IMR-90 (cell line): ENCODE measurements at regions of chr7 and their contacts with region 1.

Region 1: GRCh38 chr7:141533149-141533949 is 17.9 kb upstream of the AGK start:
- DNase-seq: peak; percentile 74
- ATAC-seq: peak; percentile 89
- H3K4me3 ChIP-seq: no peak overlapping the region
- H3K27ac ChIP-seq: no peak overlapping the region
- H3K4me1 ChIP-seq: no peaks in the 10 kb centered on the region
- H3K27me3 ChIP-seq: 0 out of 2 replicates have a peak, but pooled peaks cover 2% of the 10 kb centered on the region
- CTCF ChIP-seq: peak; percentile 82
- POLR2A ChIP-seq: no peak
- RAD21 ChIP-seq: peak; percentile 80

Region 2: DNA sequence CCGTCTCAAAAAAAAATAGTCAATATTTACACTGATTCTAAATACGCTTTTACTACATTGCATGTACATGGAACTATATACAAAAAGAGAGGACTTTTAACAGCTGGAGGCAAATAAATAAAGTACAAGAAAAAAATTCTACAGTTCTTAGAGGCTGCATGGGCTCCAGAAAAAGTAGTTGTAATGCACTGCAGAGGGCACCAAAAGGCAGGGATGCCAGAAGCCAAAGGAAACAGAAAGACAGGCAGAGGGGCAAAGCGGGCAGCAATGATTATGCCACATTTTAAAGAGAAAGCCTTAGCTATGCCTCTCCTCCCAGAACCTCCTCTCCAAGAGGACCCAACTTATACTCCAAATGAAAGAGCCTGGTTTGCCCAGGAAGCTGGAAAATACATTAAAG is 872.2 kb before region 1 on chr7:
- CTCF ChIA-PET with region 1: no interaction called
- POLR2A ChIA-PET with region 1: no interaction called
- dilution Hi-C with region 1: no loop called
- in situ Hi-C with region 1: no loop called
- intact Hi-C with region 1: loop called (anchors 1 kb)
- DNase-seq: peak; percentile 31
- ATAC-seq: peak; percentile 42
- H3K4me3 ChIP-seq: no peak overlapping the region
- H3K27ac ChIP-seq: no peak overlapping the region
- H3K4me1 ChIP-seq: peaks cover 4% of the 10 kb centered on the region; the same call in 1 of the 2 replicates
- H3K27me3 ChIP-seq: peaks cover 3% of the 10 kb centered on the region; the same call in 1 of the 2 replicates
- CTCF ChIP-seq: peak; percentile 41
- POLR2A ChIP-seq: no peak
- RAD21 ChIP-seq: peak; percentile 43

Region 3: DNA sequence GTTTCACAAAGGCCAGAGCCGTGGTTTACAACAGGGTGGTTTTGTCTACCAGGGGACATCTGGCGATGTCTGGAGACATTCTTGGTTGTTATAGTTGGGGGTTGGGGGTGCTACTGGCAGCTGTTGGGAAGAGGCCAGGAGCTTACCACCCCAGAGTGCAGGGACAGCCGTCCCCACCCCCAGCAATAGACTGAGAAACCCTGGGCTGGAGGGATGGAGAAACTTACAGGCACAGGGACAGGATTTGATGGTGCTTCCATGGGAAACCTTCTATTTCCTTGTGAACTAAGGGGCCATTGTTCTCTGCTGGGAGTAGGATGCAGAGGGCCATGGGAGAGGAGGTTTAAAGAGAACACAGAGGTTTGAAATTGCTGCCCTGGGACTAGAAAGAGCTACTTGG is 849.7 kb before region 1 on chr7:
- CTCF ChIA-PET with region 1: no interaction called
- POLR2A ChIA-PET with region 1: no interaction called
- dilution Hi-C with region 1: no loop called
- in situ Hi-C with region 1: loop called (anchors 10 kb)
- intact Hi-C with region 1: loop called (anchors 5 kb)
- DNase-seq: no peak
- ATAC-seq: no peak
- H3K4me3 ChIP-seq: no peak overlapping the region
- H3K27ac ChIP-seq: no peak overlapping the region
- H3K4me1 ChIP-seq: no peaks in the 10 kb centered on the region
- H3K27me3 ChIP-seq: no peaks in the 10 kb centered on the region
- CTCF ChIP-seq: no peak
- POLR2A ChIP-seq: no peak
- RAD21 ChIP-seq: no peak

Region 4: GRCh38 chr7:140810830-140811556 is 722.4 kb before region 1 on chr7:
- CTCF ChIA-PET with region 1: interaction called, 6 read pairs
- POLR2A ChIA-PET with region 1: no interaction called
- dilution Hi-C with region 1: no loop called
- in situ Hi-C with region 1: loop called (anchors 25 kb)
- intact Hi-C with region 1: loop called (anchors 1 kb)
- DNase-seq: peak; percentile 66
- ATAC-seq: peak; percentile 94
- H3K4me3 ChIP-seq: no peak overlapping the region
- H3K27ac ChIP-seq: no peak overlapping the region
- H3K4me1 ChIP-seq: peaks cover 2% of the 10 kb centered on the region; the same call in 1 of the 2 replicates
- H3K27me3 ChIP-seq: no peaks in the 10 kb centered on the region
- CTCF ChIP-seq: peak; percentile 72
- POLR2A ChIP-seq: no peak
- RAD21 ChIP-seq: peak; percentile 70

Region 5: GRCh38 chr7:141737834-141738591 is 204.7 kb after region 1 on chr7 and contains the start of gene SSBP1:
- CTCF ChIA-PET with region 1: no interaction called
- POLR2A ChIA-PET with region 1: no interaction called
- dilution Hi-C with region 1: no loop called
- in situ Hi-C with region 1: no loop called
- intact Hi-C with region 1: loop called (anchors 10 kb)
- DNase-seq: peak; percentile 96
- ATAC-seq: peak; percentile 97
- H3K4me3 ChIP-seq: peak within 1 kb of the TSS; percentile 65
- H3K27ac ChIP-seq: peak within 1 kb of the TSS; percentile 70
- H3K4me1 ChIP-seq: no peaks in the 10 kb centered on the region; the same call in 1 of the 2 replicates
- H3K27me3 ChIP-seq: no peaks in the 10 kb centered on the region
- CTCF ChIP-seq: peak; percentile 96
- POLR2A ChIP-seq: peak; percentile 88
- RAD21 ChIP-seq: peak; percentile 36
- total RNA-seq, gene SSBP1: 204 and 234 TPM in 2 replicates